Heart right ventricle (tissue), 16 donors: ENCODE measurements at regions of chr1 and their contacts with region 1.

Region 1: DNA sequence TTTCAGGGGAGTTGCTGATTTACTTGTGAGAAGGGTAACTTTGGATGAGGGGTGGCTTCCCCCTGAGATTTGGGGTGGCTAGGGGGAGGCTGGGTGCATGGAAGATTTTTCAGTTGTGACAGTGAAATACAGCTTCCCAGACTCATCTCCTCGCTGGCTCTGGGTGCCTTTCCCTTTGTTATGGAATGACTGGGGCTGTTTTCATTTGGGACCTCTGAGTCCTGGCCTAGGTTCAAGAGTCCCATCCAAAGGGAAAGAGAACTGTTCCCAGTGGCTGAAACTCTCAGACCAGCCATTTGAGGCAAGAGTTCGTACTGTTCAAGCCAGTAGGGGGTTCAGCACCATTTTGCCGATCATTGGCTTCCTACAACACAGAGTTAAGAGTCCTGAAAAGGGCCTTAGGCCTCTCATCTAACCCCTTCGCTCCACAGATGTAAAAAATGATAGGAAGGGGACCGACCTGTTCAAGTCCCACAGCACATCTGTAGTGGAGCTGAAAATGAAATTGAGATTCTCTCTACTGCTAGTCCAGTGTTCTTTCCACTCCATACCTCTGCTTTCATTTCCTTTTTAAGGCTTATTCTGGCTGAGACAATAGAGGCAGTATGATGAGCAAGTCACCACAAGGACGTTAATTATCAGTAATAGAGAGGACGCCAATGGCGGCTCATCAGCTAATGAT is 958 bp downstream of the DDR2 start:
- DNase-seq: peak in 1 of 2 donors; percentile 38
- ATAC-seq: peak; percentile 36 to 60 (median 54)
- H3K4me3 ChIP-seq: peak overlapping the region; percentile 29 to 63 (median 48)
- H3K27ac ChIP-seq: peak overlapping the region; percentile 63 to 88 (median 78)
- H3K4me1 ChIP-seq: peaks cover 3 to 36% (median 16%) of the 10 kb centered on the region in 9 donors
- H3K27me3 ChIP-seq: no peaks in the 10 kb centered on the region
- CTCF ChIP-seq: peak in 1 of 9 donors; percentile 30

Region 2: DNA sequence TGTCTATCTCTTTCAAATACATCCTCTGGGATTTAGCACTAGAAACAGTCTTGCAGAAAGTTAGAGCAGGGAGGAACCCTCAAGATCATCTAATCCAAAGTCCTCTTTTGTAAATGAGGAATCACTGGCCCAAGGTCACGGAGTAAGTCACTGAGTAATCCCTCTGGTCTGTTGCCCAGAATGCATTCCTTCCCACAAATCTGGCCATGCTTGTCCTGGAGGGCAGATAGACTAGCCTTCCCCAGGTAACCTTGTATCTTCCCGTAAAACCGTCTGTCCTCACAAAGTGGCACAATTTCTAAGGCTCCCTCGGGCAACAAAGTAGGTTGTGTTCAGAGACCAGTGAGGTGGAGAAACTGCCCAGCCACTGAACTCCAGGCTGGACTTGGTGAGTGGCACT is 45.2 kb after region 1 on chr1:
- intact Hi-C with region 1: loop called in 3 of 10 experiments (anchors 5 kb)
- DNase-seq: peak in 1 of 2 donors; percentile 33
- ATAC-seq: peak in 6 of 8 donors; percentile 38 to 81 (median 61)
- H3K4me3 ChIP-seq: no peak overlapping the region
- H3K27ac ChIP-seq: peak overlapping the region in 6 of 10 donors; percentile 16 to 59 (median 23)
- H3K4me1 ChIP-seq: peaks cover 6 to 57% (median 39%) of the 10 kb centered on the region in 9 donors
- H3K27me3 ChIP-seq: no peaks in the 10 kb centered on the region
- CTCF ChIP-seq: no peak

Region 3: DNA sequence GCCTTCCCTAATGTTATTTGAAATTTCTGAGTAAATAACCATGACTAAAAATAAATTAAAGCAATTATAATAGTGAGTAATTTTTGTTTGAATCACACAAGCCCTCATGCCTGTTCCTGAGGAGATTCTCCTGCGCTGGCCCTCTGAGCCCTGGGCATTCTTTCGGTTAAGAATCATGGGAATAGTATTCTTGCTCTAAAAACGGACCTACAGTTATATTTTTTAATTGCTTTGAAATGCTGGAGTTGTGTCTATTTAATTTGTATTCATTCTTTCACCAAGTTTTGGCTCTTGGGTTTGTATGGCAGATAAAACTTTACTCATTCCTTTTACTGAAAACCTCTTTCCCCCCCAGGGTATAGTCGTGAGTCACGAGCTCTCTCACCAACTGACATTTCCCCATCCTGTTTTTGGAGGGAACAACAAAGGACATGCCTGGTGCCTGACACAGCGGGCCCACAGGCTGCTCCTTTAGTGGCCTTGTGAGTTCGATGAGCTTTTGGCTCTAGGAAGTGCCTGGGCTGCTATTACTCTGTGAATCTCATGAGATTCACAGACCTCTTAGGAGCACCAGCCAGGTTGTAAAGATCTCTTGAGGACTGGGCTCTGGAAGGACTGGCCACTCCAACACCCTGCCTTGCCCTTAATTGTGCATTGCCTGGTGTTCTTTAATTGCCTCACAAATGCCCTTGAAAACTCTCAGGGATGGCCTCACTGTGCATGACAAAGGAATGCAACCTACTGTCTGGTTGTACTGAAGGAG is 57.6 kb after region 1 on chr1:
- intact Hi-C with region 1: loop called in 4 of 10 experiments (anchors 5 to 10 kb)
- DNase-seq: peak; percentile 33 to 41
- ATAC-seq: peak; percentile 42 to 87 (median 58)
- H3K4me3 ChIP-seq: no peak overlapping the region
- H3K27ac ChIP-seq: peak overlapping the region in 9 of 10 donors; percentile 43 to 71 (median 55)
- H3K4me1 ChIP-seq: peaks cover 2 to 66% (median 45%) of the 10 kb centered on the region in 9 donors
- H3K27me3 ChIP-seq: no peaks in the 10 kb centered on the region
- CTCF ChIP-seq: no peak

Region 4: GRCh38 chr1:162696286-162696862 is 63.2 kb after region 1 on chr1:
- intact Hi-C with region 1: loop called in 4 of 10 experiments (anchors 5 to 10 kb)
- DNase-seq: peak; percentile 72 to 84
- ATAC-seq: peak; percentile 96 to 97 (median 97)
- H3K4me3 ChIP-seq: peak overlapping the region in 3 of 10 donors; percentile 3 to 13 (median 7)
- H3K27ac ChIP-seq: peak overlapping the region; percentile 27 to 80 (median 71)
- H3K4me1 ChIP-seq: peaks cover 0 to 52% (median 36%) of the 10 kb centered on the region in 9 donors
- H3K27me3 ChIP-seq: no peaks in the 10 kb centered on the region
- CTCF ChIP-seq: no peak

Region 5: GRCh38 chr1:162736633-162737067 is 103.4 kb after region 1 on chr1:
- intact Hi-C with region 1: loop called in 3 of 10 experiments (anchors 5 kb)
- DNase-seq: no peak
- ATAC-seq: no peak
- H3K4me3 ChIP-seq: no peak overlapping the region
- H3K27ac ChIP-seq: no peak overlapping the region
- H3K4me1 ChIP-seq: peaks cover 0 to 35% (median 15%) of the 10 kb centered on the region in 9 donors
- H3K27me3 ChIP-seq: no peaks in the 10 kb centered on the region
- CTCF ChIP-seq: no peak

Region 6: DNA sequence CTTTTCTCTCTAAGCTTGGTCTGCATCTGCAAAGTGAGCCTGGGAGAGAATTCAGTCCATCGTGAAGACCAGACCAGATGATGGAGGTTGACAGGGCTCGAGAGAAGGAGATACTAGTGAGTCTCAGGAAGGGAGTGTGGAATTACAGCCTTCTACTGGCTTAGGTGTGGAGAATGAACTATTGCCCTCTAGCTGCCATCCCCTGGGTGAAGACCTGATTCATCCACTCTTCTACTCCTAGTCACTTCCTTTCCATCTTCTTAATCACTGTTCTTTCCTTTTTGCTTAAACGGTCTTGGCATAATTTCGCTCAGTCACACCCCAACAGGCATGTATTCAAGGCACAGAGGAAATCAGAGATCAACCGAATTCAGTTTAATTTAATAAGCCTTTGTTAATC is 123.3 kb after region 1 on chr1:
- intact Hi-C with region 1: loop called in 1 of 10 experiments (anchors 10 kb)
- DNase-seq: no peak
- ATAC-seq: peak in 1 of 8 donors; percentile 23
- H3K4me3 ChIP-seq: no peak overlapping the region
- H3K27ac ChIP-seq: no peak overlapping the region
- H3K4me1 ChIP-seq: no peaks in the 10 kb centered on the region
- H3K27me3 ChIP-seq: no peaks in the 10 kb centered on the region
- CTCF ChIP-seq: peak in 1 of 9 donors; percentile 14

Region 7: DNA sequence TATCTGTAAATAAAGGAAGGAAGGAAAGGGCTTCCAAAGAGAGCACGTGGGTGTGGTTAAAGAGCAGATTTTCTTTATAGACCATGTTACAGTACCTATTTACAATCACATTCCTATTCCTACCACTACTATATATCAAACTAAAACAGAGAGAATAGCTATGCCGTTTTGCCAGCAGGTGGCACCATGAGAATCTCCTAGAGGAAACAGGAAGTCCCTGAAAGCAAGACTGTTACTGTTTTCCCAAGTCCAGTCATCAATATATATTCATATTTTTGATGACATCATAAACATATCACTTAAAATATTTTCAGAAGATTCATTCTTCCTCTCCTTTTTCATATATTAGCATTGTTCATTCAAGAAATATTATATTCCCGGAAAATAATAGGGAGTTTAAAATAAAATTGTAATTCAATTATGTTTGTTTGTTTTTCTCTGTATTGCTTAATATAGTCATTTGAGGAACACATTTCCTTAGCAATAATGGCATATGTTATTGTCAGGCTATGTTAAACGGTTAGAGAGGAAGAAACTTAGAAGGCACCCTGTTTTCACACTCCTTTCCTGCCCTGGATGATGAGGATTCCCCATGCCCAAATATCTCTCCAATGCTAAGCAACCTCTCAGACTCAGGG is 221.1 kb after region 1 on chr1:
- intact Hi-C with region 1: no loop called
- DNase-seq: peak; percentile 28 to 47
- ATAC-seq: peak in 4 of 8 donors; percentile 58 to 76 (median 70)
- H3K4me3 ChIP-seq: no peak overlapping the region
- H3K27ac ChIP-seq: no peak overlapping the region
- H3K4me1 ChIP-seq: no peaks in the 10 kb centered on the region
- H3K27me3 ChIP-seq: peaks cover 0 to 3% (median 0%) of the 10 kb centered on the region in 7 donors
- CTCF ChIP-seq: peak; percentile 43 to 84 (median 73)